ENCODE measurements at regions of chr3 and their contacts with region 1.

Region 1: GRCh38 chr3:69855436-69856162 is 116.3 kb downstream of the MITF start:
- DNase-seq: peak; percentile 41
- H3K4me3 ChIP-seq: no peak overlapping the region
- H3K27ac ChIP-seq: peak overlapping the region; percentile 6 to 25; a peak in 1 of 4 replicates
- H3K4me1 ChIP-seq: peaks cover 0 to 6% of the 10 kb centered on the region in 2 experiments; a peak in 1 of 4 replicates
- H3K27me3 ChIP-seq: no peaks in the 10 kb centered on the region
- CTCF ChIP-seq: peak; percentile 72
- EP300 ChIP-seq: no peak
- RAD21 ChIP-seq: peak; percentile 76

Region 2: DNA sequence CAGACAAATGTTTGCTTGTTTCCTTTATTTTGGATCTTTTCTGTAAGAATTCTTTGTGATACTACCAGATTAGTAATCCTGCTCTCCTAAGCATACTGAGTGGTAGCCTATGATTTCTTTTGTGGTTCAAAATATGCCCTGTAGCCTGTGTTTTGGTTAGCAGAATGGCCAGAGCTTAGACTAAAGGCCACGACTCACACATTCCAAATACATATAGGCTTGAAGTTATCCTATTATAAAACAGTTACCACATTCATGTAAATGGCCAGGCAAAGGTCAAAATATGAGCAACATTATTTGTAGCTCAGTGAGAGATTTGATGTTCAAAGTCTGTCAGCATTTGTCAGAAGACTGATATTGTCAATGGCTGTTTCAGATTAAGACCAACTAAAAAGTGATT is 31.9 kb before region 1 on chr3:
- CTCF ChIA-PET with region 1: no interaction called
- POLR2A ChIA-PET with region 1: no interaction called
- DNase-seq: no peak
- H3K4me3 ChIP-seq: no peak overlapping the region
- H3K27ac ChIP-seq: no peak overlapping the region
- H3K4me1 ChIP-seq: no peaks in the 10 kb centered on the region
- H3K27me3 ChIP-seq: no peaks in the 10 kb centered on the region
- CTCF ChIP-seq: no peak
- EP300 ChIP-seq: no peak
- RAD21 ChIP-seq: no peak

Region 3: DNA sequence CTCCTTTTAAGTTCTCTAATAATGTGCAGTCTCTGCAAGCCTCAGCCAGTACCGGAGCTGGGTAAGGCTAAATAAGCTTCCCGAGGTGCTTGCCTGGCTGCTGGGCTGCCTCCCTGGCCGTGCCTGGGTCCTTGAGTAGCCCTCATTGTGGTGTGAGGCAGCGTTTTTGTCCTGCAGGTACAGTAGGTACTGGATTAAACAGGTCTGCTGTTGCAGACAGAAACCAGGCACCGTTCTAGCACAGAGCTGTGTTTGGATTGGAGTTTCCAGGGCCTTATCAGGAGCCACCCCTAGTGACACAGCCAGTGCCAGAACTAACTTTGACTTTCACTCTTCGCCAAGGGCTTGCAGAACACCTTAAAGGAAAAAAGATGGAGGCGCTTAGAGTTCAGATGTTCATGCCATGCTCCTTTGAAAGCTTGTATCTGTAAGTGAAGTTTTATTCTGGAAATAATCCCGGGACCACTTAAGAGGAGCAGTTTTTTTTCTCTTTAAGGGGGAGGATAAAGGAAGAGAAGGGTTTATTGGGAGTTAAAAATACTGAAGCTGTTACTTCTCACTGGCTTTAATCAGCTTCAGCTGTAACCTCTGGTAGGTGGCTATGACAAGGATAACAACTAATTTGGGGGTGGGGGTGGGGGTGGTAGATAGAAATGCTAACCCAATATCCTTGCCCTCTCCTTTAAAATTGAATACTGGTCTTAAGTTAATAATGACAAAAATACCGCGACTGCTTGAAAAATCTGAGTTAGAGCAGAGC is 10.5 kb after region 1 on chr3:
- CTCF ChIA-PET with region 1: interaction called, 11 read pairs
- POLR2A ChIA-PET with region 1: no interaction called
- DNase-seq: peak; percentile 31
- H3K4me3 ChIP-seq: no peak overlapping the region
- H3K27ac ChIP-seq: peak overlapping the region in 1 of 2 experiments; percentile 64; a peak in 1 of 4 replicates
- H3K4me1 ChIP-seq: peaks cover 0 to 11% of the 10 kb centered on the region in 2 experiments; a peak in 2 of 4 replicates
- H3K27me3 ChIP-seq: no peaks in the 10 kb centered on the region
- CTCF ChIP-seq: no peak
- EP300 ChIP-seq: no peak
- RAD21 ChIP-seq: no peak

Measured in SK-N-SH (cell line).